ENCODE measurements at regions of chr17 and their contacts with region 1.

Region 1: DNA sequence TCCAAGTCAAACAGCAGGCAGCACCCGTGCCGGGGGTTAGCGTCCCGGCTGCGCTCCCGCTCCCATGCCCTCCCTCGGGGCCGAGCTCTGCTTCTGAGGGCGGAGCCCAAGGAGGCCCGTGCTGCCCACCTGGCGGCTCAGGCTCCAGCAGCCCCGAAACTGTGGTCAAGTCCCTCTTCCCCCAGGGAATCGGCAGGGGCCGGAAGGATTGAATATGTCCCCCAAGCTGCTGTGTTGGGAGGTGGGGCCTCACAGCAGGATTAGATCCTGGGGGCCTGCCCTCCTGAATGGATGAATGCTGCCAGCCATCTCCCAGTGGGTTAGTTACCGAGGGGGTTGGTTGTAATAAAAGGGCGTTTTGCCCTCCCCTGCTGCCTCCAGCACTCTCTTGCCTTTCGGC is 33.9 kb downstream of the MAP2K3 start:
- DNase-seq: peak in 1 of 14 experiments; percentile 18
- ATAC-seq: no peak
- H3K4me3 ChIP-seq: no peak overlapping the region
- H3K4me3 Mint-ChIP-seq: no peak overlapping the region
- H3K27ac ChIP-seq: no peak overlapping the region
- H3K27ac Mint-ChIP-seq: no peak overlapping the region
- H3K4me1 ChIP-seq: peaks cover 14% of the 10 kb centered on the region
- H3K4me1 Mint-ChIP-seq: peaks cover 6% of the 10 kb centered on the region
- H3K27me3 ChIP-seq: no peaks in the 10 kb centered on the region
- H3K27me3 Mint-ChIP-seq: peaks cover 4% of the 10 kb centered on the region
- CTCF ChIP-seq: no peak

Region 2: GRCh38 chr17:21126645-21127510 is 191.6 kb before region 1 on chr17 and contains the start of gene DHRS7B:
- CTCF ChIA-PET with region 1: no interaction called
- POLR2A ChIA-PET with region 1: no interaction called
- intact Hi-C with region 1: loop called in 1 of 2 experiments (anchors 10 kb)
- DNase-seq: peak; percentile 93 to 98 (median 96)
- ATAC-seq: peak; percentile 86
- H3K4me3 ChIP-seq: peak within 1 kb of the TSS; percentile 68
- H3K4me3 Mint-ChIP-seq: peak within 1 kb of the TSS; percentile 93
- H3K27ac ChIP-seq: peak within 1 kb of the TSS; percentile 90 to 93
- H3K27ac Mint-ChIP-seq: peak within 1 kb of the TSS; percentile 93
- H3K4me1 ChIP-seq: peaks cover 18% of the 10 kb centered on the region
- H3K4me1 Mint-ChIP-seq: peaks cover 45% of the 10 kb centered on the region
- H3K27me3 ChIP-seq: no peaks in the 10 kb centered on the region
- H3K27me3 Mint-ChIP-seq: no peaks in the 10 kb centered on the region
- CTCF ChIP-seq: no peak
- total RNA-seq, gene DHRS7B: 4.9 to 5.2 TPM